ENCODE measurements at regions of chr2 and their contacts with region 1.

Region 1: GRCh38 chr2:76445880-76446279 is 735.2 kb upstream of the GCFC2 start:
- DNase-seq: no peak
- H3K4me3 ChIP-seq: no peak overlapping the region
- H3K27ac ChIP-seq: no peak overlapping the region
- H3K4me1 ChIP-seq: no peaks in the 10 kb centered on the region
- H3K27me3 ChIP-seq: no peaks in the 10 kb centered on the region
- CTCF ChIP-seq: no peak
- EP300 ChIP-seq: no peak
- POLR2A ChIP-seq: no peak

Region 2: DNA sequence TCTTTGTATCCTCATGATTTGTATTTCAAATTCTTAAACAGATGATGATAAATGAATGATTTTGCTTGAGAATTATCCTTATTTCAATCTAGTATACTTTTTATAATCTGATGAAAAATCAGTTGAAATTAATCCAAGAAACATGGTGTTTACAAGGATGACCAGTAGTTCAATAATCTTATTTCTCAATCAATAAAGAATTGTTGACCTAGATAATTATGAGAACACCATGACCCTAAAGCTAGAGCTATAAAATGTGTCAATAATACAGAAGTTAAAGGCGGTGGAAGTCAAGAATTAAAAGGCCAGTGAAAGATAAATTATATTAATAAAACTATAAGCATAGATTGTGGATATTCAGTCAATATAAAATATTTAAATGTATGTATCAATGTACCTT is 67.8 kb before region 1 on chr2:
- in situ Hi-C with region 1: no loop called
- intact Hi-C with region 1: loop called (anchors 2 kb)
- DNase-seq: no peak
- H3K4me3 ChIP-seq: no peak overlapping the region
- H3K27ac ChIP-seq: no peak overlapping the region
- H3K4me1 ChIP-seq: no peaks in the 10 kb centered on the region
- H3K27me3 ChIP-seq: no peaks in the 10 kb centered on the region
- CTCF ChIP-seq: no peak
- EP300 ChIP-seq: no peak
- POLR2A ChIP-seq: no peak

Region 3: DNA sequence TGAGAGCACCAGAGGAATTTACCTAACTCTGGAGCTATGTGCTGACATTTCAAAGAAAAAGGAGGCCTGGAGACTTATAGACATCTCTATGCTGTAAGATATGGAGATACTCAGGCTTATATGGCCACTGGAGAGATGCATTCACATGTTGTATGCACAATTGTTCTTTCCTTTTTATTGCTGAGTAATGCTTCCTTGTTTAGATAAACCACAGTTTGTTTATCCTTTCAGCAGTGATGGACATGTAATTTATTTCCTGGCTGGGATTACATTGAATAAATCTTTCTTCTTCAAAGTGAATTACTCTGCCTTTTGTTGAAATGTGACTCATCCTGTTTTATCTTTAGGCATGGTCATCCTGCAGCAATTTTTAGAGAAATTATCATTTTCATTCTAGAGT is 18.4 kb before region 1 on chr2:
- in situ Hi-C with region 1: no loop called
- intact Hi-C with region 1: no loop called
- DNase-seq: no peak
- H3K4me3 ChIP-seq: no peak overlapping the region
- H3K27ac ChIP-seq: no peak overlapping the region
- H3K4me1 ChIP-seq: no peaks in the 10 kb centered on the region
- H3K27me3 ChIP-seq: no peaks in the 10 kb centered on the region
- CTCF ChIP-seq: no peak
- EP300 ChIP-seq: no peak
- POLR2A ChIP-seq: no peak

Measured in transverse colon (tissue), 4 donors.